ENCODE measurements at regions of chr12 and their contacts with region 1.

Region 1: DNA sequence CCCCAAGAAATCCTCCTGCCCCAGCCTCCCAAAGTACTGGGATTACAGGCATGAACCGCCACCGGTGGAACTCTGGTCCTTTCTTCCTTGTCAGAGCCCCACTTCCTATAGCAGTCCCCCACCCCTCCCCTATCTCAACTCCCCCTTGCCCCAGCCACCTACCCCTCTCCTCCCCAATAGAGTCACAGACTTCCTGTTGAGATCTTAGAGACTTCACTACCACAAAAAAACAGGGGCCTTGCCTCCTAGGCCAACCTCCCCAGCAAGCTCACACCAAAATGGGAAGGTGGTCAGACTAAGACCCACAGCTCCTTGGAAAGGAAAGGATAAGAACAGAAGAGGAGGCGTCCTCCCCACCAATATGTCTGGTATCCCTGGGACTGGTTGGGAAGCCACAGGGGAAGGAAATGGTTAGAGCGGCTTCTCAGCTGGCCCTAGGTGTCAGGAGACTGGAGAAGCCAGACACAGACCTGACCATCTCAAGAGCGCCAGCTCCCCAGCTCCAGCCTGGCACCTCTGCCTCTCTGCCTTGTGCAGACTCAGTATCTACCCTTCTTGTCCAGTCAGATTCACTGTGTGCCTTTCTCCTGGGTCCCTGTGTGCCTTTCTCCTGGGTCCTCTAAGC is 8.5 kb downstream of the ITGB7 start:
- DNase-seq: peak; percentile 12
- ATAC-seq: no peak

Region 2: DNA sequence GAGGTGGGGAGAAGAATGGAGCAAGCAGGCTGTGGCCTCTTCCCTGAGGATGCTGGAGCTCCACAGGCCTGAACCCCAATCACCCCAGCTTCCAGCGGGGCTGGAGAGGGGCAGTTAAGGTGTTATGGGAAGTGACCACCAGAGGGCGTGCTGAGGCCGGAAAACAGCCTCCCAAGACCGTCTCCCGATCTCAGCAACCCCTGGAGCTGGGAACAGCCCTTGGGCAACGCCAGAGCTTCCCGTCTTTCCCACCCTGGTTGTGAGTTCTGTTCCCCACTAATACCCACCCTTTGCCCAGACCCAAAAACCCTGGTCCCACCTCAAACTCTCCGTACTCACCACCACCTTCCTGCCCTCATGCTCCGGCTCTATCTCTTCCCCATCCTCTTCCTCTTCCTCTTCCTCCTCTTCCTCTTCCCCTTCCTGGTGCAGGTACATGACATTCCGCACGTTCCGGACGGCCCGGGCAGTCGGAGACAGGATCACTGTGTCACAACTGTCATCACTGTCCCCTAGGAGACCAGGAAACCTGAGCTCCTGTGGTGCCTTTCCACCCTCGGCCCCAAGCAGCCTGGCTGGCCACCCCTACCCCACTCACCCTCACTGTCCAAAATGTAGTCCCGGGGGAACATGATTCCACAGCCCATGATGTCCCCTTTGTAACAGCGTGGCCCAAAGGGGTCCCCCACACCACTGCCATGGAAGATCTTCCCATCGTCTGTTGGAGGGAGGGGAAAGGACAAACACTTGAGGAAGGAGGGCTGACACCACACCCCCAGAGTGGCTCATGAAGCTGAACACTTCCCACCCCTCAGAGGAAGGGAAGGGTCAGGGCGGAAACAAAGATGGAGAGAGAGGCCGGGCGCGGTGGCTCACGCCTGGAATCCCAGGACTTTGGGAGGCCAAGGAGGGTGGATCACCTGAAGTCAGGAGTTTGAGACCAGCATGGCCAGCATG is 132.3 kb before region 1 on chr12:
- intact Hi-C with region 1: loop called (anchors 5 kb)
- DNase-seq: peak; percentile 85
- ATAC-seq: peak; percentile 63

Region 3: GRCh38 chr12:53159195-53159839 is 39.3 kb before region 1 on chr12:
- intact Hi-C with region 1: loop called (anchors 1 kb)
- DNase-seq: peak; percentile 91
- ATAC-seq: peak; percentile 87

Measured in Right ventricle myocardium superior (tissue), 1 donor.